Sigmoid colon (tissue), 7 donors: ENCODE measurements at regions of chr11 and their contacts with region 1.

Region 1: GRCh38 chr11:89613911-89614310 is 96.2 kb upstream of the TRIM77 start:
- DNase-seq: no peak
- H3K4me3 ChIP-seq: no peak overlapping the region
- H3K27ac ChIP-seq: no peak overlapping the region
- H3K4me1 ChIP-seq: no peaks in the 10 kb centered on the region
- H3K27me3 ChIP-seq: no peaks in the 10 kb centered on the region
- CTCF ChIP-seq: no peak
- EP300 ChIP-seq: no peak
- POLR2A ChIP-seq: no peak

Region 2: GRCh38 chr11:89327885-89328284 is 286.0 kb before region 1 on chr11:
- intact Hi-C with region 1: loop called (anchors 10 kb)
- DNase-seq: no peak
- H3K4me3 ChIP-seq: no peak overlapping the region
- H3K27ac ChIP-seq: no peak overlapping the region
- H3K4me1 ChIP-seq: no peaks in the 10 kb centered on the region
- H3K27me3 ChIP-seq: no peaks in the 10 kb centered on the region
- CTCF ChIP-seq: no peak
- EP300 ChIP-seq: no peak
- POLR2A ChIP-seq: no peak

Region 3: DNA sequence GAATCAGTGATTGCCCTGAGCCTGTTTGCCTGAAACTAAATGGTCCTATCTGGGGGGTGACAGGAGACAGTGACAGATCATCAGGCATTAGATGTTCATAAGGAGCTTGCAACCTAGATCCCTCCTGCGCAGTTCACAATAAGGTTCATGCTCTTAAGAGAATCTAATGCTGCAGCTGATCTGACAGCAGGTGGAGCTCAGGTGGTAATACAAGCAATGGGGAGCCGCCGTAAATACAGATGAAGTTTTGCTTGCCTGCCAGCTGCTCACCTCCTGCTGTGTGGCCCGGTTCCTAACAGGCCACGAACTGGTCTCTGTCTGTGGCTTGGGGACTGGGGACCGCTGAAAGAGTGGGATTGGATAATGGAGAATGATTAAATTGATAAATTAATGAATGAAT is 136.7 kb before region 1 on chr11:
- intact Hi-C with region 1: no loop called
- DNase-seq: no peak
- H3K4me3 ChIP-seq: no peak overlapping the region
- H3K27ac ChIP-seq: no peak overlapping the region
- H3K4me1 ChIP-seq: no peaks in the 10 kb centered on the region
- H3K27me3 ChIP-seq: no peaks in the 10 kb centered on the region
- CTCF ChIP-seq: no peak
- EP300 ChIP-seq: no peak
- POLR2A ChIP-seq: no peak

Region 4: DNA sequence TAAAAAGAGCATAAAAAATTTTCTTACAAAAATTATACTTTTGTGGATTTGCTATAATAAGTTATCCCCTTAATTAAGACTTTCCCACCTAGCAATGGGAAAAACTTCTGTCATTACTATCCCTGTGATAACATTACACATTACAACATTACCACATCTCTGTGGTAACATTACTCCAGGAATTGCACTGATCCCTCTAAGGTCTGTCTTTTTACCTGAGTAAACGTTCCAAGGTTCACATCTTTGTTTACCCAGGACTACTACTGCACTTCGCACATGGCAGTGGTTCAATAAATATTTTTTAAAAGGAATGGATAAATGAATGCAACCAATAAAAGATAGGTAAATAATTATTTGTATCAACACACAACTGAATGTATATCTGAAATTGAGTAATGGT is 30.3 kb before region 1 on chr11:
- intact Hi-C with region 1: no loop called
- DNase-seq: no peak
- H3K4me3 ChIP-seq: no peak overlapping the region
- H3K27ac ChIP-seq: no peak overlapping the region
- H3K4me1 ChIP-seq: no peaks in the 10 kb centered on the region
- H3K27me3 ChIP-seq: no peaks in the 10 kb centered on the region
- CTCF ChIP-seq: no peak
- EP300 ChIP-seq: no peak
- POLR2A ChIP-seq: no peak